Breast epithelium (tissue), 4 donors: ENCODE measurements at regions of chr3 and their contacts with region 1.

Region 1: DNA sequence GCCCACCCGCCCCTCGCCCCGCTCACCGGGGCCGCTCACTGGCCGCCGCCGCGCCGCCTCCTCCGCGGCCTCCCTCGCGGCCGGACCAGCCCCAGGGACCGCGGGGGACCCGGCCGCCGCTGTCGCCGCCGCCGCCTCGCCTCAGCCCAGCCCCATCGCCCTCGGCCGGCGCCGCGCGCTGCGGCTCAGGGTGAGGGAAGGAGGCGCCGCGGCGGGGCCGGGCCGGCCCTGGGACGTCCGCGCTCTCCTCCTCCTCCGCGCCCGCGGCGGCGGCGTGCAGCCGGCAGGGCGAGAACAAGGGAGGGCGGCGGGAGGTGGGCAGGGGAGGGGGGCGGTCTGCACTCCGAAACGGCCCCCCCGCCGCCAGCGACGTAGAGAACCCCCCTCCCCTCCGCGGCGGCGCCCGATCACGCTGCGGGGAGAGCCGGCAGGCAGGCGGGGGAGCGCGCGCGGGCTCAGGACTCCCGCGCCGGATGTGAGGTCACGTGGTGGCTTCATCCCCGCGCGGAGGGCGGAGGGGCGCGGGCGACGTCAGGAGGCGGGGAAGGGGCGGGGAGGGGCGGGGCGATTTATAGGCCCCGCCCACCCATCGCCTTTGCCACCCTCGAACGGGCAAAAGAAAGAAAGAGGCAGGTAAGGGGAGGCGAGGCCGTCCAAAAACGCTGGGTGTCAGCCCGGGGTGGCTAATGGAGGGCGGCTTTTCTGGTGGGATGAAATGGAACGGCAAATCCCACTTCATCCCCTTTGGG is at the start of gene ATP13A3:
- DNase-seq: peak; percentile 79 to 85
- H3K4me3 ChIP-seq: peak within 1 kb of the TSS; percentile 60 to 96 (median 75)
- H3K27ac ChIP-seq: peak within 1 kb of the TSS; percentile 92 to 96
- H3K4me1 ChIP-seq: no peaks in the 10 kb centered on the region
- H3K27me3 ChIP-seq: no peaks in the 10 kb centered on the region
- CTCF ChIP-seq: no peak
- POLR2A ChIP-seq: no peak
- total RNA-seq, gene ATP13A3: 132 to 170 (median 142) TPM

Region 2: GRCh38 chr3:194583604-194584318 is 97.0 kb after region 1 on chr3:
- intact Hi-C with region 1: loop called (anchors 5 kb)
- DNase-seq: peak; percentile 87 to 94
- H3K4me3 ChIP-seq: peak overlapping the region; percentile 65 to 97 (median 72)
- H3K27ac ChIP-seq: peak overlapping the region; percentile 95 to 96
- H3K4me1 ChIP-seq: no peaks in the 10 kb centered on the region
- H3K27me3 ChIP-seq: no peaks in the 10 kb centered on the region
- CTCF ChIP-seq: no peak
- POLR2A ChIP-seq: peak; percentile 95